ENCODE measurements at regions of chr5 and their contacts with region 1.

Region 1: DNA sequence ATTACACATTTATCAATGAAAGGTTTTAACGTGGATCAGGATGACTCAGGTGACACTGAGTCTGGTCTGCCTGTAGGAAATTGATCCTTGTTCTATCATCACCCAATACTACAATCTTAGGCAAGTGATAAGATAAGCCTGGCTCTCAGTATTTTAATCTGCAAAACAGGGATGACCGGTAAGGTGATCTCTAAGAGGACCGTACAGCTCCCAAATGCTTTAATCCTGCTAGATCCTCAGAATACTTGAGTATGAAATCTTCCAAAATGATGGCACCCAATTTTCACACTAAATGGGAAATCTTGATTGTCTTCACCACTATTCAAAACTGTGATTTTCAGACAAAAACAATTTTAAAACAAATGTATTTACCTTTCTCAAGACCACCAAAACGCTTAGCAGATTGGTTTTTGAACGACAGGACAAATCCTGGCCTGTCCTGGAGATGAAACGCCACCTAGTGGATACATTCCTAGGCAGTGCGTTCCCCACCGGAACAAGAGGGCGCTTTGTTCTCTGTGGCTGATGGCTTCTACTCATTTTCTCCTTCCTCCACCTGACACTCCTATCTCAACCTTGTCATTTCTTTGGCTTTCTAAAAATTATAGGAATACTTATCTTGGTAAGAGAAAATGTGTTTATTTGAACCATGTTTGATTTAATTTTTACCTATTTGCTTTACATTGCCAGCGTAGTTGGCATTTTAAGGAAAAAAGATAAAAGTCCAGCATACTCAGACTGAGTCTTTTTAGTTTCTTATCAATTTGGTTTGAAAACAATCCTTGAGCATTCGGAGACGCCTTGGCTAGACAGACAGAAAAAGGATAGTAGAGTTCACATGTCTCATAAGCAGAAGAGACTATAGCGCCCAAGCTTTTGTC is 41.2 kb upstream of the VCAN start:
- DNase-seq: peak; percentile 48 to 79 (median 54)
- ATAC-seq: peak; percentile 99
- H3K4me3 ChIP-seq: no peak overlapping the region
- H3K27ac ChIP-seq: no peak overlapping the region
- H3K4me1 ChIP-seq: no peaks in the 10 kb centered on the region
- H3K27me3 ChIP-seq: no peaks in the 10 kb centered on the region; a peak in 1 of 5 replicates
- CTCF ChIP-seq: peak; percentile 87 to 98 (median 97)
- EP300 ChIP-seq: no peak
- POLR2A ChIP-seq: no peak
- RAD21 ChIP-seq: peak; percentile 73 to 92

Region 2: DNA sequence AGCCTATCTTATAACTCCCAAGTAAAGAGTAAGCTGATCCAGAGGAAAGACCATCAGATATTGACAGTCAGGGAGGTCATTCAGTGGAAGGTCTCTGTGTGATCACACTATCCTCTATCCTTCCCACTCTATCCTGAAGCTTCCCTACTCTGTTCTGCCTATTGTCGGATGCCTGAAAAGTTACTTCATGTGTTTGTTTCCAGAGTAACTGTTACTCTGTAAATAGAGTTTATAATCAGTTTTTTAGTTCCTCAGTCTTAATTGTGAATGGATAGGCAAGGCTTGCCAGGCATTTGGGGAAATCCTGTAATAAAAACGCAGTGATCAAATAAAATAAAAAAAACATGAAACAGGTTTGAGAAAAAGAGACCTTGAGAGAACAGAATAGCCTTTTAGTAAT is 273.2 kb before region 1 on chr5:
- CTCF ChIA-PET with region 1: no interaction called
- POLR2A ChIA-PET with region 1: no interaction called
- in situ Hi-C with region 1: no loop called
- intact Hi-C with region 1: no loop called
- DNase-seq: no peak
- ATAC-seq: no peak
- H3K4me3 ChIP-seq: no peak overlapping the region
- H3K27ac ChIP-seq: no peak overlapping the region
- H3K4me1 ChIP-seq: no peaks in the 10 kb centered on the region
- H3K27me3 ChIP-seq: no peaks in the 10 kb centered on the region
- CTCF ChIP-seq: no peak
- EP300 ChIP-seq: no peak
- POLR2A ChIP-seq: no peak
- RAD21 ChIP-seq: no peak

Region 3: DNA sequence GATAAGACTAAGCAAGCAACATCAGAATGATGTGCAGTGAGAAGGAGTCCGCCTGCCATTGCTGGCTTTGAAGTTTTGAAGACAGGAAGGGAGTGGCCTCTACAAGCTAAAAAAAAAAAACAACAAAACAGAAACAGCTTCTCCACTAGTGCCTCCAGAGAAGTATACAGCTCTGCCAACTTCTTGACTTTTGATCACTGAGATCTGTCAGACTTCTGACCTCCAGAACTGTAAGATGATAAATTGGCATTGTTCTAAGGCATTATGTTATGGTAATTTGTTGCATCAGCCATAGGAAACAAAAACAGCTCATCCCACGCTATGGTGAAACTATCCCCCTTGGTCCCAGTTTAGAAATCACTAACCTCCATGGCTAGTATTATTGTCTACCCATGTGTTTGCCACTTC is 89.9 kb before region 1 on chr5:
- CTCF ChIA-PET with region 1: no interaction called
- POLR2A ChIA-PET with region 1: no interaction called
- in situ Hi-C with region 1: no loop called
- intact Hi-C with region 1: loop called (anchors 5 kb)
- DNase-seq: no peak
- ATAC-seq: peak; percentile 81
- H3K4me3 ChIP-seq: no peak overlapping the region
- H3K27ac ChIP-seq: no peak overlapping the region
- H3K4me1 ChIP-seq: peaks cover 0 to 6% of the 10 kb centered on the region in 2 experiments; a peak in 1 of 5 replicates
- H3K27me3 ChIP-seq: no peaks in the 10 kb centered on the region
- CTCF ChIP-seq: no peak
- EP300 ChIP-seq: no peak
- POLR2A ChIP-seq: no peak
- RAD21 ChIP-seq: no peak

Region 4: GRCh38 chr5:83364312-83365299 is 65.8 kb before region 1 on chr5:
- CTCF ChIA-PET with region 1: no interaction called
- POLR2A ChIA-PET with region 1: no interaction called
- in situ Hi-C with region 1: no loop called
- intact Hi-C with region 1: no loop called
- DNase-seq: no peak
- ATAC-seq: no peak
- H3K4me3 ChIP-seq: no peak overlapping the region
- H3K27ac ChIP-seq: no peak overlapping the region
- H3K4me1 ChIP-seq: peaks cover 0 to 7% of the 10 kb centered on the region in 2 experiments; a peak in 3 of 5 replicates
- H3K27me3 ChIP-seq: no peaks in the 10 kb centered on the region
- CTCF ChIP-seq: no peak
- EP300 ChIP-seq: no peak
- POLR2A ChIP-seq: no peak
- RAD21 ChIP-seq: no peak

Region 5: DNA sequence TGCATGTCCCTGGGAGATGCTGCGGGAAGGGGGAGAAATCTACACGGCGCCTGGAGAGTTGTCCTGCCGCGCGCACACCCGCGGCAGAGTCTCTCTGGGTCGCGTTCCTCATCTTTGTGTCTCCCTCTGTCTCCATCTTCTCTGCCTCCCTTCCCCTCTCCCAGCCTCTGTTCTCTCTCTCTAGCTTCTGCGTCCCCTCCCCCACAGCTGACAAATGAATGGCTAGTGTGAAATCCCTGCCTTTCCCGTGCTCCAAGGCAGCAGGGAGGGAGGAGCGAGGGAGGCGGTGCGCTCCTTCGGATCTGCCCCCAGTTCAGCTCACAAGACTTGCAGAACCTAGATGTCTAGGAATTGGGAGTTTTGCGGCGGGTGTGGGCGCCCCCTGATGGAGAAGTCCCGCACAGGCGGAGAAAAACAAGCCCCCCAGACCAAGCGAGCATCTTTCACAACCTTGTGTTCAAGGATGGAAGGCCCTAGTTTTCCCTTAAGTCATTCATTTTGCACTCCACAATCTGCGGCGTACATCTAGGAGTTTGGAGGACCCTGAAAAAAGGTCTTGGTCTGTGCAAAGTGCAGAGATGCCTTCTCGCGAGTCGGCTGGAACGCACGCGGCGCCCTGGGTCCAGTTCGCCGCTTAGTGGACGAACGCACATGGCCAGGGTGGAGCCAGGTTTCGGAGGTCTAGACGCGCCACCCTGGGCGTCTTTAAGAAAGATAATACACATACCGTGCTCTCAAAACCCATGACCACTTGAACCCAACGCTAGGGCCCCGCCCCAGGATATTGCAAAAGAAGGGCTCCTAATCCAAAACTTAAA is 43.2 kb after region 1 on chr5:
- CTCF ChIA-PET with region 1: no interaction called
- POLR2A ChIA-PET with region 1: no interaction called
- in situ Hi-C with region 1: no loop called
- intact Hi-C with region 1: loop called (anchors 5 kb)
- DNase-seq: peak; percentile 64 to 77 (median 70)
- ATAC-seq: peak; percentile 85
- H3K4me3 ChIP-seq: peak overlapping the region; percentile 40
- H3K27ac ChIP-seq: peak overlapping the region; percentile 53; the same call in 1 of the 3 replicates
- H3K4me1 ChIP-seq: peaks cover 5 to 36% of the 10 kb centered on the region in 2 experiments; a peak in 3 of 5 replicates
- H3K27me3 ChIP-seq: peaks cover 11 to 25% of the 10 kb centered on the region in 2 experiments; a peak in 4 of 5 replicates
- CTCF ChIP-seq: peak; percentile 73 to 87 (median 76)
- EP300 ChIP-seq: no peak
- POLR2A ChIP-seq: no peak
- RAD21 ChIP-seq: peak; percentile 71 to 78

Region 6: GRCh38 chr5:83653669-83654068 is 223.3 kb after region 1 on chr5:
- CTCF ChIA-PET with region 1: no interaction called
- POLR2A ChIA-PET with region 1: no interaction called
- in situ Hi-C with region 1: no loop called
- intact Hi-C with region 1: no loop called
- DNase-seq: no peak
- ATAC-seq: no peak
- H3K4me3 ChIP-seq: no peak overlapping the region
- H3K27ac ChIP-seq: no peak overlapping the region
- H3K4me1 ChIP-seq: no peaks in the 10 kb centered on the region
- H3K27me3 ChIP-seq: no peaks in the 10 kb centered on the region
- CTCF ChIP-seq: no peak
- EP300 ChIP-seq: no peak
- POLR2A ChIP-seq: no peak
- RAD21 ChIP-seq: no peak